ENCODE measurements at regions of chr14 and their contacts with region 1.

Region 1: DNA sequence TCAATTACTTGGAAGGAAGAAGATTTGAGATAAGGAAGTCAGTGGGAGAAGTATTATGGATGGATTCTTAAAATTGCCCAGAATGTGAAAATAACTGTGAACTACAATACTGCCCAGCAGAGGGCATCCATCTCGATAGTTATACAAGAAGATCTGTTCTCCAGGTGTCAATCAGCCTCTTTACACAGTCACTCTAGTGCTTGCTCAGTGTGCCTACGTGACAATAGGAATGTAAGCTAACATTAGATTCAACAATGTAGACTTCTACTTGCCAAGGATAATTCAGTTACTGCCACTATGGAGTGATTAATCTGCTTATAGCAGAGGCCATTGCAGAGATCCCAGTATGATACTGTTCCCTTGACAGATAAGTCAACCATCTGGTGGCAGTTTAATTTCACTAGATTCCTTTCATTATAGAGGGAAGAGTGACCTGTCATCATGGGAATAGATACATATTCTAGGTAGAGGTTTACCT is 10.6 kb upstream of the MAP4K5 start:
- DNase-seq: peak in 6 of 9 experiments; percentile 19 to 70 (median 28)
- ATAC-seq: peak; percentile 81
- H3K4me3 ChIP-seq: no peak overlapping the region
- H3K4me3 Mint-ChIP-seq: no peak overlapping the region
- H3K27ac ChIP-seq: no peak overlapping the region
- H3K27ac Mint-ChIP-seq: no peak overlapping the region
- H3K4me1 ChIP-seq: peaks cover 5% of the 10 kb centered on the region
- H3K4me1 Mint-ChIP-seq: peaks cover 11% of the 10 kb centered on the region
- H3K27me3 ChIP-seq: no peaks in the 10 kb centered on the region
- H3K27me3 Mint-ChIP-seq: no peaks in the 10 kb centered on the region
- CTCF ChIP-seq: peak; percentile 47

Region 2: DNA sequence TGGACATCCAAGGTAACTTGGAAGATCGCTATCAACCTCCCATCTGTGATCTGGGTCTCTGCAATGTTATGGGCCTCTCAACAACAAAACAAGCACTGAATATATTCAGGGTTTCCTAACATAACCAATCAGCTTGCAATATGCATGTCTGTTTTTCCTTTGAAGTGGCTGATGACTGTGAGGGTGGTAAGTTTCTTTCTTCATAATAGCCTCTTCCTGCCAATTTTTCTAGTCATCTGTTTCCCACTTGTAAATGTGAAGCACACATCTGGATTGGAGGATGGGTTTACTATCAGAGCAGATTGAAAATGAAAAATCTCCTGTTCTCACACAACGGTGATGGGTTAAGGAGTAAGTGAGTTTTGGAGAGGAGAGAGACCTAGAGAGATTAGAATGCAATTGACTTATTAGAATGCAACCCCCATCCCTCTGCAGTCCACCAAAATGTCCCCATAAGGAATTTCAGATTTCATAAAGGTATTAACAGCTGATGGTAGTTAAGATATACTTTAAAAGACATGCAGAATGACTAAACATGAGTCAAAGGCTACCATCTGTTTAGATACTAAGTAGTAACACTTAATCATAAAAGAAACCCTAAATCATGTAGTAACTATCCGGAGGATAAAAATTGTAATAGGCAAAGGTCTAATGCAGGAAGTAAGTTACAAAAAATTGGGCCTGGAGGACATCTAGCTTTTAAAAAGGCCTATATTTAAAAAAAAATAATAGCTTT is 183.6 kb after region 1 on chr14:
- CTCF ChIA-PET with region 1: no interaction called
- POLR2A ChIA-PET with region 1: no interaction called
- intact Hi-C with region 1: loop called in 1 of 2 experiments (anchors 10 kb)
- DNase-seq: peak in 2 of 9 experiments; percentile 39 to 69
- ATAC-seq: peak; percentile 92
- H3K4me3 ChIP-seq: no peak overlapping the region
- H3K4me3 Mint-ChIP-seq: peak overlapping the region; percentile 12
- H3K27ac ChIP-seq: peak overlapping the region; percentile 7 to 41
- H3K27ac Mint-ChIP-seq: peak overlapping the region; percentile 86
- H3K4me1 ChIP-seq: peaks cover 12% of the 10 kb centered on the region
- H3K4me1 Mint-ChIP-seq: peaks cover 29% of the 10 kb centered on the region
- H3K27me3 ChIP-seq: no peaks in the 10 kb centered on the region
- H3K27me3 Mint-ChIP-seq: no peaks in the 10 kb centered on the region
- CTCF ChIP-seq: no peak

Region 3: GRCh38 chr14:50778721-50779483 is 235.9 kb after region 1 on chr14:
- CTCF ChIA-PET with region 1: interaction called, 10 read pairs
- POLR2A ChIA-PET with region 1: no interaction called
- intact Hi-C with region 1: loop called (anchors 1 to 2 kb)
- DNase-seq: peak in 1 of 9 experiments; percentile 28
- ATAC-seq: peak; percentile 27
- H3K4me3 ChIP-seq: no peak overlapping the region
- H3K4me3 Mint-ChIP-seq: no peak overlapping the region
- H3K27ac ChIP-seq: peak overlapping the region in 1 of 2 experiments; percentile 17
- H3K27ac Mint-ChIP-seq: peak overlapping the region; percentile 80
- H3K4me1 ChIP-seq: peaks cover 57% of the 10 kb centered on the region
- H3K4me1 Mint-ChIP-seq: peaks cover 68% of the 10 kb centered on the region
- H3K27me3 ChIP-seq: no peaks in the 10 kb centered on the region
- H3K27me3 Mint-ChIP-seq: no peaks in the 10 kb centered on the region
- CTCF ChIP-seq: no peak

Measured in CD8-positive, alpha-beta T cell (primary cell).